Activated CD8-positive, alpha-beta T cell treated with anti-CD3 and anti-CD28 coated beads for 36 hours (primary cell): ENCODE measurements at regions of chr1 and their contacts with region 1.

Region 1: GRCh38 chr1:145906954-145907753 is 2.7 kb downstream of the ITGA10 start:
- DNase-seq: no peak
- ATAC-seq: no peak
- H3K4me3 Mint-ChIP-seq: no peak overlapping the region
- H3K27ac Mint-ChIP-seq: no peak overlapping the region
- H3K4me1 Mint-ChIP-seq: peaks cover 5% of the 10 kb centered on the region
- H3K27me3 Mint-ChIP-seq: no peaks in the 10 kb centered on the region
- CTCF ChIP-seq: no peak

Region 2: DNA sequence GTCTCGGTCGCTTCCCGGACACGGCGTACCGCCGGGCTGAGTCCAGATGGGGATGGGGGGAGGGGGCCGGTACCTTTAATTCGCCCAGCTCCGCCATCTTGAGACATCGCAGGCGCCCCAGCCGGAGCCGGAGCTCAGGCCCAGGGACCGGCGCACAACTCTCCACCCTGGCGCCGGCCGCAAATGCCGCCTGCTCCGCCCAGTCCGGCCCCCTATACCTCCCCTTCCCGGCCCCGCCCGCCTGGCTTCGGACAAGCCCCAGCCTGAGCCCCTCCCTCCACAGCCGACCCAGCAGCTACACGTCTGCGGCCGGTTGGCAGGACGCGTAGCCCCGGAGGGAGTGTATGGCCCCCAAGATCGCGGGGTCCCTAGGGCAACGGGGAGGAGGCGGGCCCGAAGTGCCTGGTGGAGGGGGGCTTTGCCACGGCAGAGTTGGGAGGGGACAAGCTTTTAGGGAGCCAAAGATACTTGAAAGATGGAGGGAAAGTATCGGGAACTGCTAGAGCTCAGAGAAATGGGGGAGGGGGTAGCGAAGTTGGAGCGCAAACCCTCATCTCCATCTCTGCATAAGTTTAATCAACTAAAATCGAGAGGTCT is 48.2 kb before region 1 on chr1 and contains the start of gene PIAS3:
- CTCF ChIA-PET with region 1: interaction called, 10 read pairs
- POLR2A ChIA-PET with region 1: interaction called, 8 read pairs
- intact Hi-C with region 1: no loop called
- DNase-seq: peak; percentile 92
- ATAC-seq: peak; percentile 87
- H3K4me3 Mint-ChIP-seq: peak within 1 kb of the TSS; percentile 98
- H3K27ac Mint-ChIP-seq: peak within 1 kb of the TSS; percentile 86
- H3K4me1 Mint-ChIP-seq: peaks cover 14% of the 10 kb centered on the region
- H3K27me3 Mint-ChIP-seq: no peaks in the 10 kb centered on the region
- CTCF ChIP-seq: no peak
- total RNA-seq, gene PIAS3: 17.9 to 18.9 TPM

Region 3: DNA sequence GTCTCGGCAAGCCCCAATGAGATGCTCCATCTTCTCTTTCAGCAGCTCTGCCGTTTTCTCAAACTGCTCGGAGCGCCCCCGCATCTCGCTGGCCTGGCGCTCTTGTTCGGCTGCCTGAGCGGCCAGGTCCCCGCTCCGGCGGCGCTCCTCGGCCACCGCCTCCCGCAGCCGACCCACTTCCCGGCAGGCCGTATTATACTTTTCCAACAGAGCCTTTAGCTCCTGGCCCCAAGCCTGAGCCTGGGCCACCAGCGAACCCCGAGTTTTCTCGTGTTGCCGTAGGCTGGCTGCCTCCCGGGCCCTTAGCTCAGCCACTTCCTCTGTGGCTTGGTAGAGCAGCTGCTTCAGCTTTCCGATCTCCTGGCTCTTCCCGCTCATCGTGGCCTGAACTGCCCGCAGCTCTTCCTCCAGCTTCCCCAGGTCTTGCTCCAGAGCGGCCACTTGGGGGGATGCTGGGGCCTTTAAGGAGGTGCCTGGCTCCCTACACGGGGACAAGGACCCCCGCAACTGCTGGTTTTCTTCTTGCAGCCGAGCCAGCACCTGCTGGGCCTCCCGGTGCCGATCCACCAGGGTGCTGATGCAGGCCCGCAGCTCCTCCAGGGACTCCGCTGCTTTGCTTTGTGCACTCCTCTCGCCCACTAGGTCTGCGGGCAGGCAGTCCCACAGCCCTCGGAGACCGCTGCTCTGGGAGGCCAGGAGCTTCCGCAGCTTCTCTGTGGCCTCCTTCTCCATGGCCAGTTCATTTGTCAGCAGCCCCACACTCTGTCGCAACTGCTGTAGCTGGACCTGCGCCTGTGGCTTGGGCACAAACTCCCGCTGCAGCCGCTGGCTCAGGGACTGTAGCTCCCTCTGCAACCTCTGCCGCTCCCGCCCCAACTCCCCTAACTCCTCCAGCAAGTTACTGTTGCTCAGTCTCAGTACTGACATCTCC is 34.9 kb before region 1 on chr1:
- CTCF ChIA-PET with region 1: interaction called, 11 read pairs
- POLR2A ChIA-PET with region 1: interaction called, 3 read pairs
- intact Hi-C with region 1: no loop called
- DNase-seq: peak; percentile 47
- ATAC-seq: peak; percentile 81
- H3K4me3 Mint-ChIP-seq: peak overlapping the region; percentile 75
- H3K27ac Mint-ChIP-seq: peak overlapping the region; percentile 27
- H3K4me1 Mint-ChIP-seq: peaks cover 13% of the 10 kb centered on the region
- H3K27me3 Mint-ChIP-seq: peaks cover 8% of the 10 kb centered on the region
- CTCF ChIP-seq: no peak

Region 4: DNA sequence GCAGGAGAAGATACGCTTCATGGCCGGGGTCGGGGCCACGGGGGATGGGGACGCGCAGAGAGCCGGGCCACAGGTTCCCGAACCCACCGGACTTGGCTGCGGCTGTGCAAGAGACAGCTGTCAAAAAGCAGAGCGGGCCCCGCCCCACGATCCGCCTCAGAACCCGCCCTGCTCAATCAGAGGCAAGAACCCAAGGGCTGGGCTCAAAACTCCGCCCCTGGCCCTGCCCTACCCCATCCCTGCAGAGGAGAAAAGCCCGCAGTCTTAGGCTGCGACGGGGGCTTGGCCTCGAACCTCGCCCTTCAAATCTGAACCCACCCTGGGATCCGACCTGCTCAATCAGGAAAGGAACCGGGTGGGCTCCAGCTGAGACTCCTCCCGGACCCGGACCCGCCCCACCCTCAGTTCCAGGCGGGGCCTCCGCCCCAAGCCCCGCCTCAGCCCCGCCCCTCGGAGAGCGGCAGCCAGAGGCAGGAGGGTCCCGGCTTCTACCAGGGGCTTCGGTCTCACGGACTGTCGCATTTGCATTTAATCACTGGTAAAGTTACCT is 21.3 kb before region 1 on chr1 and contains the start of gene ANKRD35:
- CTCF ChIA-PET with region 1: interaction called, 32 read pairs
- POLR2A ChIA-PET with region 1: interaction called, 3 read pairs
- intact Hi-C with region 1: no loop called
- DNase-seq: peak; percentile 95
- ATAC-seq: peak; percentile 99
- H3K4me3 Mint-ChIP-seq: peak within 1 kb of the TSS; percentile 74
- H3K27ac Mint-ChIP-seq: no peak within 1 kb of the TSS
- H3K4me1 Mint-ChIP-seq: peaks cover 17% of the 10 kb centered on the region
- H3K27me3 Mint-ChIP-seq: peaks cover 20% of the 10 kb centered on the region
- CTCF ChIP-seq: no peak
- total RNA-seq, gene ANKRD35: 0.54 to 0.59 TPM

Region 5: GRCh38 chr1:145918144-145918992 is 11.2 kb after region 1 on chr1 and contains the start of gene PEX11B:
- CTCF ChIA-PET with region 1: interaction called, 4 read pairs
- POLR2A ChIA-PET with region 1: interaction called, 10 read pairs
- intact Hi-C with region 1: no loop called
- DNase-seq: peak; percentile 96
- ATAC-seq: peak; percentile 92
- H3K4me3 Mint-ChIP-seq: peak within 1 kb of the TSS; percentile 96
- H3K27ac Mint-ChIP-seq: peak within 1 kb of the TSS; percentile 97
- H3K4me1 Mint-ChIP-seq: peaks cover 51% of the 10 kb centered on the region
- H3K27me3 Mint-ChIP-seq: no peaks in the 10 kb centered on the region
- CTCF ChIP-seq: no peak
- total RNA-seq, gene PEX11B: 25.8 to 26.3 TPM